PC-9 (cell line): ENCODE measurements at regions of chr3 and their contacts with region 1.

Region 1: DNA sequence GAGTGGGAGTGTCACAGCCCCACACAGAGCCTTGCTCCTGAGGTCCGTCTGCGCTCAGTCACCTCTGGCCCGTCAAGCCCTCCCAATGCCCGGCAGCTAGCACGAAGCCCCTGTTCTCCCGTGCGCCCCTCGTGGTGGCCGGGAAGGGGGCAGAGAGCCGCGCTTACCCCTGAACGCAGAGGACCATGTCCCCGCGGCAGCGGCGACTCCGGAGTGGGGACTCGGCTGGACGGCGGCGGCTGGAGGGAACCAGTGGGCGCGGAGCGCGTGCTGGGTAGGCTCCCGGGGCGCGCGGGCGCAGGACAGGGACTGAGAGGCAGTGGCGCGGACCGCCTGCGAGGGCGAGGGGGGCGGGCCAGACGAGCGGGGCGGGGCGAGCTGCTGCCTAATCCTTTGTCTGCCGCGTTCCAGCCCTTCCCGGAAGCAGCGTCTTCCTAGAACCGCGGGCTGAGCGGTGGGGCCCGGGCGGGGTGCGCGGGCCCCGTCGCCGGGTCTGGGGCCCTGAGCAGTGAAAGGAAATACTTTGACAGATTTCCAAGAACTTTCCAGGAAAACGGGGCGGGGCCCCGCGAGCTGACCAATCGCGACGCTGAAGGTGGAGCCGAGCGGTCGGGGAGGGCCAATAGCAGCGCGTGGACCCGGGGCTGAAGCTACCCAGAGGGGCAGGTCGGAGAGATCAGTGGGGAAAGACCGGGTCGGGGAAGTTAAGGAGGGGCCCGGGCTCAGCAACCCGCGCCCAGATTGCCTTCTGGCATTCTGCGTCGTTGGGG is at the start of gene CISH:
- DNase-seq: peak; percentile 80 to 91
- H3K4me3 ChIP-seq: peak within 1 kb of the TSS; percentile 65
- H3K27ac ChIP-seq: no peak within 1 kb of the TSS
- H3K4me1 ChIP-seq: peaks cover 18% of the 10 kb centered on the region
- H3K27me3 ChIP-seq: no peaks in the 10 kb centered on the region
- CTCF ChIP-seq: no peak; the same call in 1 of the 2 replicates
- total RNA-seq, gene CISH: 2.7 and 3.2 TPM in 2 replicates

Region 2: GRCh38 chr3:50519471-50520089 is 92.1 kb before region 1 on chr3:
- CTCF ChIA-PET with region 1: no interaction called
- POLR2A ChIA-PET with region 1: no interaction called
- intact Hi-C with region 1: loop called (anchors 1 kb)
- DNase-seq: peak; percentile 43 to 72
- H3K4me3 ChIP-seq: no peak overlapping the region
- H3K27ac ChIP-seq: no peak overlapping the region
- H3K4me1 ChIP-seq: no peaks in the 10 kb centered on the region
- H3K27me3 ChIP-seq: peaks cover 61% of the 10 kb centered on the region
- CTCF ChIP-seq: peak; percentile 89

Region 3: DNA sequence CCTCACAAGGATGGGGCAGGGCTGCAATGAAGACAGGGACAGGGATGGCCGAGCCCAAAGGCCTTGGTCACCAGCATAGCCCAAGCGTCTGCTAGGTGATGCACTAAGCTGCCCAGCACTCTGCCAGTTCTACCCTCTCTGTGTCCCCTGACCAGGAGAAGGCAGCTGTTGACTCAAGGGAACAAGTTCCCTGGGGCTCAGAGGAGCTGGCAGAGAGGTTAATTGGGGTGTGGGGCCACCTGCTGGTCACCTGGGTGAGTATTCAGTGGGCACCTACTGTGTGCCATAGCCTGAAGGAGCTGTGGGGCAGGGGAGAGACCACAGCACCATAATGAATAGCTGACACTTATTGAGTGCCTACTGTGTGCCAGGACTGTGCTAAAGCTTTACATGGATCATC is 41.1 kb after region 1 on chr3:
- CTCF ChIA-PET with region 1: interaction called, 16 read pairs
- POLR2A ChIA-PET with region 1: no interaction called
- intact Hi-C with region 1: loop called (anchors 1 kb)
- DNase-seq: peak in 1 of 2 experiments; percentile 55
- H3K4me3 ChIP-seq: no peak overlapping the region
- H3K27ac ChIP-seq: no peak overlapping the region
- H3K4me1 ChIP-seq: no peaks in the 10 kb centered on the region
- H3K27me3 ChIP-seq: no peaks in the 10 kb centered on the region
- CTCF ChIP-seq: peak; percentile 76

Region 4: DNA sequence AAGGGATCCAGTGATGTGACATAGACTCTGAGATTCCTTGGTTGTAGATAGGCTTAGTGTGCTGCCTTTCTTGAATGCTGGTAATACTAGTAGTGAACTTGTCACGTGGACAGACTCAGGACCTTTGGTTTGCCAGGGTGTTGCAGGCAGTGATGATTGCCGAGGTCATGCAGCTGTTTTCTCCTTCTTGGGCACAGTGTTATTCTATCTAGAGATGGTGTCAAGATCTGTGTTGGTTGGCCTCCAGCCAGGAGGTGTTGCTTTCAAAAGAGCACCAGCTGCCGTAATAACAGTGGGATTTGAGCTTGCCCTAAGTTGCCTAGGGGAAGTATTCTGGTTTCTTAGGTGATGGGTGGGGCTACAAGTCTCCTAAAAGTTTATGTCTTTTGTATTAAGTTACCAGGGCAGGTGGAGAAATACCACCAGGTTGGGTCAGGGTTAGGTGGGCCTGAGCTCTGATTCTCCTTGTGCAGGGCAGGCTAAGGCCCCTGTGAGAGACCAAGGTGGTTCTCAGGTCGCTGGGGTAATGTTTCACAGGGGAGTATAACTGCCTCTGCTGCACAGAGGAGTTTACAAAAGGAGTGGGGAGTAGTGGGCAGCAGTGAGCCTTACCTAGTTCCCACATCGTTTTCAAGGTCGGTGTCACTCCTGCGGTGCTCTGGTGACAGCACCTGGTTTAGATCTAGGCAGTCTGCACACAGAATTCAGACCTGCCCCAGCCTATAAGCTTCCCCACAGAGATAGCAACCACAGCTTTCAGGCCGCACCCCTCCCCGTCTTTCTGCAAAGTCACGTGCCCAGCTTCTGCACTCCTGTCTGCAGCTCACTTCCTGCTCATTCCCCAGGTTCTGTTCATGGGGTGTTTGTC is 413.4 kb after region 1 on chr3:
- CTCF ChIA-PET with region 1: no interaction called
- POLR2A ChIA-PET with region 1: interaction called, 11 read pairs
- intact Hi-C with region 1: no loop called
- DNase-seq: peak in 1 of 2 experiments; percentile 60
- H3K4me3 ChIP-seq: no peak overlapping the region
- H3K27ac ChIP-seq: no peak overlapping the region
- H3K4me1 ChIP-seq: no peaks in the 10 kb centered on the region
- H3K27me3 ChIP-seq: no peaks in the 10 kb centered on the region
- CTCF ChIP-seq: no peak

Region 5: GRCh38 chr3:51434746-51435327 is 823.2 kb after region 1 on chr3:
- CTCF ChIA-PET with region 1: no interaction called
- POLR2A ChIA-PET with region 1: no interaction called
- intact Hi-C with region 1: loop called (anchors 2 kb)
- DNase-seq: peak in 1 of 2 experiments; percentile 14
- H3K4me3 ChIP-seq: no peak overlapping the region
- H3K27ac ChIP-seq: no peak overlapping the region
- H3K4me1 ChIP-seq: no peaks in the 10 kb centered on the region
- H3K27me3 ChIP-seq: no peaks in the 10 kb centered on the region
- CTCF ChIP-seq: peak; percentile 62